ENCODE measurements at regions of chr2 and their contacts with region 1.

Region 1: DNA sequence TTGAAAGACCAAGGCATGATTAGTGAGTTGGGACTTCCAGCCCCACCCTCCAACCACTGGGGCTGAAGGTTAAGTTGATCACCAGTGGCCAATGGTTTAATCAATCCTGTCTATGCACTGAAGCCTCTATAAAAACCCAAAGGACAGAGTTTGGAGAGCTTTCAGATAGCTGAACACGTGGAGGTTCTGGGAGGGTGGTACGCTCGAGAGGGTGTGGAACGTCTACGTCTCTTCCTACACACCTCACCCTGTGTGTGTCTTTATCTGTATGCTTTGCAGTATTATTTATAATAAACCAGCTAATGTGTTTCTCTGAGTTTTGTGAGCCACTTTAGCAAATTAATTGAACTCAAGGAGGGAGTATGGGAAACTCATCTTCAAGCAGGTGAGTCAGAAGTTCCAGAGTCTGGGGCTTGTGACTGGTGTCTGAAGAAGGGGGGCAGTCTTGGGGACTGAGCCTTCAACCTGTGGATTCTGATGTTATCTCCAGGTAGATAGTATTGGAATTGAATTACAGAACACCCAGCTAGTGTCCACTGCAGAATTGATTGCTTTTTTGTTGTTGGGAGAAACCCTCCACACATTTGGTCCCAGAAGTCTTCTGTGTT is 20.3 kb downstream of the ACTR3 start:
- DNase-seq: no peak
- ATAC-seq: peak; percentile 56
- H3K4me3 ChIP-seq: no peak overlapping the region
- H3K27ac ChIP-seq: no peak overlapping the region
- H3K4me1 ChIP-seq: peaks cover 4% of the 10 kb centered on the region; the same call in 1 of the 2 replicates
- H3K27me3 ChIP-seq: no peaks in the 10 kb centered on the region
- CTCF ChIP-seq: no peak
- EP300 ChIP-seq: no peak
- POLR2A ChIP-seq: no peak
- RAD21 ChIP-seq: no peak

Region 2: GRCh38 chr2:113896791-113897190 is 13.4 kb before region 1 on chr2:
- CTCF ChIA-PET with region 1: interaction called, 59 read pairs
- POLR2A ChIA-PET with region 1: interaction called, 80 read pairs
- RAD21 ChIA-PET with region 1: interaction called, 24 read pairs
- SMC1A ChIA-PET with region 1: interaction called, 189 read pairs
- in situ Hi-C with region 1: no loop called
- intact Hi-C with region 1: loop called (anchors 2 kb)
- DNase-seq: no peak
- ATAC-seq: no peak
- H3K4me3 ChIP-seq: peak overlapping the region; percentile 89
- H3K27ac ChIP-seq: no peak overlapping the region
- H3K4me1 ChIP-seq: peaks cover 24% of the 10 kb centered on the region
- H3K27me3 ChIP-seq: no peaks in the 10 kb centered on the region
- CTCF ChIP-seq: no peak
- EP300 ChIP-seq: no peak
- POLR2A ChIP-seq: no peak
- RAD21 ChIP-seq: no peak

Region 3: DNA sequence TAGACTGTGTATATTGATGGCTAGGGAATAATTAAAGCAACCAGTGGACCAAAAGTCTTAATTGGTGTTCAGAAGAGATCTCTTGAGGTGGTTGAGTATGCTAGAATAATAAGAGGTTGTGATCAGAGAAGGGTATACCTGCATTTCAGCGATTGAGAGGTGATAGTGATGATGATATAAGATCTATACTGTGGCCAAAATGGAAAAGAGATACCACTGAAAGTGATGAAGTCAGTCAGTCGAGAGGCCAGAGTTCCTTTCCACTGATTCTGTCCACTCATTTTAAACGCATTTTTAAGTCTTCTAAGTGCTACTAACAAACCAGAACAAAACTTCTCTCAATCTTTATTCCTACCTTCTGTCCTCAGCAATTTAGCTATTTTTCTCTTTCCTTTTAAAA is 12.6 kb after region 1 on chr2:
- CTCF ChIA-PET with region 1: interaction called, 3 read pairs
- POLR2A ChIA-PET with region 1: no interaction called
- RAD21 ChIA-PET with region 1: no interaction called
- SMC1A ChIA-PET with region 1: interaction called, 12 read pairs
- in situ Hi-C with region 1: no loop called
- intact Hi-C with region 1: no loop called
- DNase-seq: no peak
- ATAC-seq: peak; percentile 82
- H3K4me3 ChIP-seq: no peak overlapping the region
- H3K27ac ChIP-seq: peak overlapping the region; percentile 27; the same call in 1 of the 2 replicates
- H3K4me1 ChIP-seq: peaks cover 27% of the 10 kb centered on the region
- H3K27me3 ChIP-seq: no peaks in the 10 kb centered on the region
- CTCF ChIP-seq: no peak
- EP300 ChIP-seq: peak in 1 of 2 experiments; percentile 24; a peak in 1 of 4 replicates
- POLR2A ChIP-seq: no peak
- RAD21 ChIP-seq: no peak